ENCODE measurements at regions of chr1 and their contacts with region 1.

Region 1: GRCh38 chr1:160328184-160328583 is 14.9 kb downstream of the COPA start:
- DNase-seq: no peak
- H3K4me3 ChIP-seq: no peak overlapping the region
- H3K27ac ChIP-seq: no peak overlapping the region
- H3K27me3 ChIP-seq: no peaks in the 10 kb centered on the region
- CTCF ChIP-seq: no peak

Region 2: GRCh38 chr1:160291248-160292220 is 36.6 kb before region 1 on chr1:
- in situ Hi-C with region 1: loop called (anchors 5 kb)
- DNase-seq: peak; percentile 64
- H3K4me3 ChIP-seq: no peak overlapping the region
- H3K27ac ChIP-seq: no peak overlapping the region
- H3K27me3 ChIP-seq: no peaks in the 10 kb centered on the region
- CTCF ChIP-seq: peak; percentile 81